AG04449 (cell line): ENCODE measurements at regions of chr1 and their contacts with region 1.

Region 1: GRCh38 chr1:41432481-41433280 is 51.8 kb downstream of the EDN2 start:
- DNase-seq: peak; percentile 33
- H3K4me3 ChIP-seq: no peak overlapping the region
- CTCF ChIP-seq: peak; percentile 98

Region 2: DNA sequence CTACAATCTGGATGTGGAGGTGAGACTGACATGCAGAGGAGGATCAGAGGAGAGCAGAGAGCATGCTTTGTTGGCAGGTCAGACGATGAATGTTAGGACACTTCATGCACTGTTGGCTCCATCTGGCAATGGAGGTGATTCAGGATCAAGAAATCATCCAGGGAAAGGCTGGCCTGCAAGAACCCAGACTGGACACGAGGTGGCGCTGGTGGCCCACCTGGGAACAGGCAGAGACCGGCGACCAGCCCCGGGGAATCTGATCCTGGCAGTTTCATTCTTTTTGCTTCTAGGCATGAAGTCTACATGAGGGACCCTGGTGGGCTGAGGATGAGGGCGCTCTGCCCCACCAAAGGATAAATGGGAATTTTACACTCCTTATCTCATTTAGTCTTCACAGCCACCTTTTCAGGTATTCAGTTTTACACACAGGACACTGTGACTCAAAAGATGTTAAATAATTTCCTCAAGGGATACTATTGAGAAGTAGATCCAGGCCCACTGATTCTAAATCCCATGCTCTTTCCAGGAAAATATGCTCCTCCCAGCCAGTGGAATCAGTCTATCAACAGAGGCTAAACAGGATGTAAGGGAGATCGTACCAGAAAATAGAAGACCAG is 164.4 kb before region 1 on chr1:
- CTCF ChIA-PET with region 1: interaction called, 25 read pairs
- POLR2A ChIA-PET with region 1: no interaction called
- DNase-seq: no peak
- H3K4me3 ChIP-seq: no peak overlapping the region
- CTCF ChIP-seq: peak; percentile 93

Region 3: GRCh38 chr1:41282679-41283317 is 149.9 kb before region 1 on chr1:
- CTCF ChIA-PET with region 1: interaction called, 102 read pairs
- POLR2A ChIA-PET with region 1: no interaction called
- DNase-seq: no peak
- H3K4me3 ChIP-seq: no peak overlapping the region
- CTCF ChIP-seq: peak; percentile 93

Region 4: GRCh38 chr1:41455479-41456332 is 23.0 kb after region 1 on chr1:
- CTCF ChIA-PET with region 1: interaction called, 122 read pairs
- POLR2A ChIA-PET with region 1: no interaction called
- DNase-seq: no peak
- H3K4me3 ChIP-seq: no peak overlapping the region
- CTCF ChIP-seq: no peak

Region 5: GRCh38 chr1:41474490-41475271 is 42.0 kb after region 1 on chr1:
- CTCF ChIA-PET with region 1: interaction called, 31 read pairs
- POLR2A ChIA-PET with region 1: no interaction called
- DNase-seq: no peak
- H3K4me3 ChIP-seq: no peak overlapping the region
- CTCF ChIP-seq: no peak